Activated CD4-positive, alpha-beta memory T cell treated with anti-CD3 and anti-CD28 coated beads for 36 hours (primary cell): ENCODE measurements at regions of chr19 and their contacts with region 1.

Region 1: DNA sequence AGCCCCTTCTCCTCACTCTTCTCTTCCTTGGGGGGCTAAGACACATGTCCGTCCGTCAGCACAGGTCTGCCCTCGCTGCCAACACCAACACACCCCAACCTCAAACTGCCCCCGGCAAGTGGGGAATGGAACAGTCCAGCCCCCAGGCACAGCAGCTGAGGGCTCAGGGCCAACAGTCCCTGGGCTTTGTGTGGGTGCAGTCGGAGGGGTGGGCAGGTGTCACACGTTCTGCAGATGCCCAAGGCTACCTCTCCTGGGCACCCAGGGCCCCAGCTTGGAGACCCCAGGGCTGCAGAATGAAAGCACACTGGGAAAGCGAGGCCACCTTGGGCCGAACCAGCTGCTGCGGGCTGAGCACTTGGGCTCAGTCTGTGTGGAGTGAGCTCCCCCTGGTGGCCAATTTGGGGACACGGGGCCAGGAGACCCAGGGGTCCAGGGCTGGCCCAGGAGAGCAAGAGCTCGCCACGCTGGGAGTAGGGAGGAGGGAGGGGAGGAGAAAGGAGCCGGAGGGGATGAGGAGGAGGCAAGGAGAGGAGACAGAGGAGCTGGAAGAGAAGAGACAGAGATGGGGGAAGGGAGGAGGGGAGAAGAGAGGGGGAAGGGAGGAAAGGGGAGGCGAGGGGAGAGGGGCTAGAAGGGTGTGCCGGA is 14.0 kb upstream of the ATP8B3 start:
- DNase-seq: peak; percentile 79
- H3K4me3 Mint-ChIP-seq: no peak overlapping the region
- H3K27ac Mint-ChIP-seq: no peak overlapping the region
- H3K4me1 Mint-ChIP-seq: no peaks in the 10 kb centered on the region
- H3K27me3 Mint-ChIP-seq: no peaks in the 10 kb centered on the region

Region 2: DNA sequence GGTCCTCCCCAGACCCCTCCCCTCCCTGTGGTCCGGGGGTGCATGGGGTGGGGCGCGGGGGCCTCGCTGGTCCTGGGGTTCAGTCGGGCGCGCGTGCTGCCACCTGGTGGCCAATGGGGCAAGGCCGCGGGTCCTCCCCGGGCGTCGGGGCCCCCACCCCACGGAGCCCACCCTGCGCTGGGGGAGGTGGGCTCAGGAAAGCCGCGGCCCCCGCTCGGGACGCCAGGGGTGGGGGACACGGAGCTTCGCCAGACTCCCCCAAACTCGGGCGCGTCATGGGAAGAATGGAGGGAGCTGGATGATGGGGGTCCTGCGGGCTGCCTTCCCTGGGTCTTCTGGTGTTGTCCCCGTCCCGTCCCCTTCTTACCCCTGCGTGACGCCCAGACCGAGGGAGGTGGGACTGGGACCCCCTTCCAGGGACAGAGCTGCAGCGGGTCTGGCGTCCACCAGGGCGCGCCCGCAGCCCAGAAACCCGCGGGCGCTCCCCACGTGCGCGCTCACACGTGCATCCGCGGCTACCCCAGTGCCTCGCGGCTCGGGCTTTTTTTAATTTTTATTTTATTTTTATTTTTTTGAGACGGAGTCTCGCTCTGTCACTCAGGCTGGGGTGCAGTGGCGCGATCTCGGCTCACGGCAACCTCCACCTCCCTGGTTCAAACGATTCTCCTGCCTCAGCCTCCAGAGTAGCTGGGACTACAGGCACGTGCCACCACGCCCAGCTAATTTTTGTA is 153.8 kb before region 1 on chr19:
- CTCF ChIA-PET with region 1: interaction called, 17 read pairs
- POLR2A ChIA-PET with region 1: no interaction called
- intact Hi-C with region 1: no loop called
- DNase-seq: peak; percentile 58
- H3K4me3 Mint-ChIP-seq: no peak overlapping the region
- H3K27ac Mint-ChIP-seq: no peak overlapping the region
- H3K4me1 Mint-ChIP-seq: peaks cover 16% of the 10 kb centered on the region
- H3K27me3 Mint-ChIP-seq: peaks cover 46% of the 10 kb centered on the region

Region 3: DNA sequence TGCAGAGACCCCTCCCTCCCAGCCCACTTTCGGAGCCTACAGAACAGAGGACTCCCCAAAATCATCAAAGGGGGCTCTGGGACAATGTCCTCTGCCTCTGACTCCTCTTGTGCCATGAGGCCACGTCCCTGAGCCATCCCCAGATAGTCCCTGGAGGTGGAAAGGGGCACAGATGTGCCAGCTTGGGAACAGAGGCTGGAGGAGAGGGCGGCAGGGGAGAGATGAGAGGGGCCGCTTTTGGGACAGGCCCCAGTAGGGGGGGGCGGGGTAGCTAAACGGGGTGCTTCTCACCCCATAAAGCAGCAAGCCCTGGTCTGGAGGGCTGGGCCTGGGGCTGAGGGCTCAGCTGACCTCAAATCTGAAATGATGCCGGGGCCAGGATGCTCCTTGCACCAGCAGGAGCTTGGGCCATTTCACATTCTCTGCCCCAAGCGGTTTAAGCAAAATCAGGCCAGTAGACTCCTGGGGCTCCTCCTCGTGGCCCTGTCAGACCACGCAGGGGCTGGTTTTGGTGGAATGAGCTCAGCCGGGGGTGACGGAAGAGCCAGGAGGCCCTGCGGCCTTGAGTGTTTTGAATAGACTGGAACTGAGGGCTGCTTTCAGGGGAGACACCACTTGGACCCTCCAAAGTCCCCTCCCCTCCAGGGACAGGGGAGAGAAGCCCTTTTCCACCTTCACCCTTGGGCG is 45.6 kb before region 1 on chr19:
- CTCF ChIA-PET with region 1: interaction called, 21 read pairs
- POLR2A ChIA-PET with region 1: no interaction called
- intact Hi-C with region 1: no loop called
- DNase-seq: no peak
- H3K4me3 Mint-ChIP-seq: no peak overlapping the region
- H3K27ac Mint-ChIP-seq: no peak overlapping the region
- H3K4me1 Mint-ChIP-seq: no peaks in the 10 kb centered on the region
- H3K27me3 Mint-ChIP-seq: peaks cover 55% of the 10 kb centered on the region

Region 4: GRCh38 chr19:1799695-1800342 is 26.2 kb before region 1 on chr19:
- CTCF ChIA-PET with region 1: interaction called, 12 read pairs
- POLR2A ChIA-PET with region 1: no interaction called
- intact Hi-C with region 1: no loop called
- DNase-seq: no peak
- H3K4me3 Mint-ChIP-seq: no peak overlapping the region
- H3K27ac Mint-ChIP-seq: no peak overlapping the region
- H3K4me1 Mint-ChIP-seq: peaks cover 3% of the 10 kb centered on the region
- H3K27me3 Mint-ChIP-seq: peaks cover 8% of the 10 kb centered on the region

Region 5: GRCh38 chr19:1837625-1838105 is 11.6 kb after region 1 on chr19:
- CTCF ChIA-PET with region 1: interaction called, 54 read pairs
- POLR2A ChIA-PET with region 1: no interaction called
- intact Hi-C with region 1: no loop called
- DNase-seq: peak; percentile 71
- H3K4me3 Mint-ChIP-seq: no peak overlapping the region
- H3K27ac Mint-ChIP-seq: no peak overlapping the region
- H3K4me1 Mint-ChIP-seq: peaks cover 24% of the 10 kb centered on the region
- H3K27me3 Mint-ChIP-seq: no peaks in the 10 kb centered on the region